ENCODE measurements at regions of chr2 and their contacts with region 1.

Region 1: DNA sequence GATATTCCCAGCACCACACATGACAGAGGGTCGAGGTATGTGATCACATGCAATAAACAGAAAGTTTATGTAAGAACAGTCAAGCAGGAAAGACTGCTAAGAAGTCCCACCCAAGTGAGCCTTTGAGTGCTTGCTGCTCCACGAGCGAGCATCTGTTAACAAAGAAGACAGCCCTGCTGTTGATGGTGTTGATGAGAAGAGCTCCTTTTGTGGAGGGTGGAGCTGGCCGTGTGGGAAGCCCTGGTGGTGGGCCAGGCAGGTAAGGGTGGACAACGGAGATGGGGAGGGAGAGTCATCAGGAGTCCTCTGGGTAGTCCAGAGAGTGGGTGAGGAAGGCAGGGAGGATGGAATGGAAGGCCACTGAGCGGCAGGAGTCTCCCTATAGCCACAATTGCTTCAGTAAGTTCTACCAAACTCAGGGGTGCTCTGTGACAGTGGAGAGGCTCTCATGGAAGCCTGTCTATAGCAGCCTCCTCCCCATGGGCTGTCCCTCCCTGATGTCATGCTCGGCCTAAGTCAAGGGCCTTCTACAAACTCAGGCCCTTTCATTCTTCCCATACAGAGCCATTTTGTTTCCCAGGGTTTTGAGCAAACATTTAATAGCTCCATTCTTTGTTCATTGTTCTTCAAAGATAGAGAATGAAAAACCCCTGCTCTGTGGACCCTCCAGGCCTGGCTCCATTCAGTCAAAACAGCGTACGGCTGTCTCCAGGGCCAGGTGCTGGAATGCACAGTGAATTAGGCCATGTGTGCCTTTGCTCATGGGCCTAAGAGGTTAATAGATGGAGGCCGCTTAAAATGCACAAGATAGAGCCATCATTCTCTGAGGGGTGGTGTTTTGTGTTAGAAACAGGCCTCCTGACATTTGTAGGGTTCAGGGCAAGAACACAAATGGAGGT is 494.2 kb upstream of the RAB6C start:
- DNase-seq: no peak
- ATAC-seq: no peak
- H3K4me3 ChIP-seq: no peak overlapping the region
- H3K4me3 Mint-ChIP-seq: no peak overlapping the region
- H3K27ac ChIP-seq: no peak overlapping the region
- H3K27ac Mint-ChIP-seq: no peak overlapping the region
- H3K4me1 ChIP-seq: peaks cover 5% of the 10 kb centered on the region
- H3K4me1 Mint-ChIP-seq: no peaks in the 10 kb centered on the region
- H3K27me3 ChIP-seq: no peaks in the 10 kb centered on the region
- H3K27me3 Mint-ChIP-seq: no peaks in the 10 kb centered on the region
- CTCF ChIP-seq: no peak

Region 2: GRCh38 chr2:128422571-128422970 is 1062.7 kb before region 1 on chr2:
- intact Hi-C with region 1: no loop called
- DNase-seq: no peak
- ATAC-seq: no peak
- H3K4me3 ChIP-seq: no peak overlapping the region
- H3K4me3 Mint-ChIP-seq: no peak overlapping the region
- H3K27ac ChIP-seq: no peak overlapping the region
- H3K27ac Mint-ChIP-seq: no peak overlapping the region
- H3K4me1 ChIP-seq: no peaks in the 10 kb centered on the region
- H3K4me1 Mint-ChIP-seq: no peaks in the 10 kb centered on the region
- H3K27me3 ChIP-seq: no peaks in the 10 kb centered on the region
- H3K27me3 Mint-ChIP-seq: peaks cover 0 to 6% of the 10 kb centered on the region in 2 donors
- CTCF ChIP-seq: no peak

Region 3: DNA sequence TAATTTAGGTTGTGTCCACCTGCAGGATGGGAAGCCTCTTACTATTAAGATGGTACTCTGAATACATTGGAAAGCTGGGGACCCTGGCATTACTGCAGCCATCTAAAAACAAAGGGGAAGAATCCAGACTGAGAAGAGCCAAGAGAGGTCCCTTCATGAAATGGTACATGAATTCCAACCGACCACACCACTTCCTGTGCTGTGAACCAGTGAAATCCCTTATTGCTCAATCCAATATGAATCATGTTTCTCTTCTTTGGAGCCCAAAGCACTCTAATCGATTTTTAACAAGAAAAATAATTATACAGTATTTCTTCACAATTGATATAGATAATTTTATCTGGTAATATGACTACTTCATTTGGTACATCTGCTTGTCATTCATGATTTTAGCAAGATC is 14.5 kb after region 1 on chr2:
- intact Hi-C with region 1: loop called (anchors 1 kb)
- DNase-seq: no peak
- ATAC-seq: no peak
- H3K4me3 ChIP-seq: no peak overlapping the region
- H3K4me3 Mint-ChIP-seq: no peak overlapping the region
- H3K27ac ChIP-seq: no peak overlapping the region
- H3K27ac Mint-ChIP-seq: no peak overlapping the region
- H3K4me1 ChIP-seq: no peaks in the 10 kb centered on the region
- H3K4me1 Mint-ChIP-seq: no peaks in the 10 kb centered on the region
- H3K27me3 ChIP-seq: no peaks in the 10 kb centered on the region
- H3K27me3 Mint-ChIP-seq: no peaks in the 10 kb centered on the region
- CTCF ChIP-seq: no peak

Region 4: DNA sequence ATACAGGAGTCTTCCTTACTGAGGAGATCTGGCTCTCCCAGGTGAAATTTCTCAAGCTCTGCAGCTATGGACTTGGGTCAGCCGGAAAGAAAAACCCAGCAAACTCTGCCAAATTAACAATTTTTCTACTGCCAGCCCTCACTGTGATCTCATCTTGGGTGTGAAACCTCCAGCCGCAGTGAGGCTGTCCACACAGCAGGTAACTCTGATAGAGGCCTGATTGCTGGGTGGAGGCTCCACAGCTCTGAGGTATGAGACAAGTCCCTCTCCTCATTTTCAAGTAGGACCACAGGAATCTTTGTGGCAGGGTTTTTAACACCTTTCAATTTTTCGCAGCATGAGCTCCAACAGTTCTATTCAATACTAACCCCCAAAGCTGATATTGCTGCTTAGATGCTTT is 63.6 kb after region 1 on chr2:
- intact Hi-C with region 1: no loop called
- DNase-seq: no peak
- ATAC-seq: no peak
- H3K4me3 ChIP-seq: no peak overlapping the region
- H3K4me3 Mint-ChIP-seq: no peak overlapping the region
- H3K27ac ChIP-seq: no peak overlapping the region
- H3K27ac Mint-ChIP-seq: no peak overlapping the region
- H3K4me1 ChIP-seq: no peaks in the 10 kb centered on the region
- H3K4me1 Mint-ChIP-seq: no peaks in the 10 kb centered on the region
- H3K27me3 ChIP-seq: no peaks in the 10 kb centered on the region
- H3K27me3 Mint-ChIP-seq: no peaks in the 10 kb centered on the region
- CTCF ChIP-seq: no peak